Activated CD4-positive, alpha-beta memory T cell treated with anti-CD3 and anti-CD28 coated beads, Interleukin-2, amount 10 ng/mL, durations not matched to agents 7 days and 5 days (primary cell): ENCODE measurements at regions of chr7 and their contacts with region 1.

Region 1: DNA sequence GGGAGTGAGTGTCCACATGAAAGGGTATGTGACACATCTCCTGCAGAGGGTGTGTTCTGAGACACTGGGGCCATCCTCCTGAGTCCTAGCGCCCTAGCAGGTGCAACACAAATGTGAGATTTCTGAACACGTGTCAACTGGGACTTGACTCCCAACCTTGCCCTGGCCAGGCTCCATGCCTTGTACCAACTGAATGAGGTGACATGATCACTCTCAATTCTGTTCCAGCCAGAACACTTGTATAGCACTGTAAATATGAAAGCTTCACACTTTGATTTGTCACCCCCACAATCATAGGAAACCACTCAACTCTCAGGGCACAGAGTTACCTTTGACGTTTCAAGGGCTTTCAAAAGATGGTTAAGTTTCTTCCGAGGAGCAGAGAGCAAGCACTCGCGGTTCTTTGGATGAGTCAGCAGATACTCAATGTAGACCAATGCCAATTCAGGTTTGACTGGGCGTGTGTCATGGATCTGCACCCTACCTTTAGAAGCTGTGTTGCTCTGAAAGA is 48.6 kb downstream of the NCAPG2 start:
- DNase-seq: peak; percentile 78
- H3K4me3 Mint-ChIP-seq: peak overlapping the region; percentile 31
- H3K27ac Mint-ChIP-seq: peak overlapping the region; percentile 92
- H3K4me1 Mint-ChIP-seq: peaks cover 36% of the 10 kb centered on the region
- H3K27me3 Mint-ChIP-seq: no peaks in the 10 kb centered on the region

Region 2: GRCh38 chr7:158695726-158696452 is 39.9 kb after region 1 on chr7:
- CTCF ChIA-PET with region 1: interaction called, 5 read pairs
- POLR2A ChIA-PET with region 1: interaction called, 14 read pairs
- DNase-seq: peak; percentile 48
- H3K4me3 Mint-ChIP-seq: no peak overlapping the region
- H3K27ac Mint-ChIP-seq: peak overlapping the region; percentile 44
- H3K4me1 Mint-ChIP-seq: peaks cover 59% of the 10 kb centered on the region
- H3K27me3 Mint-ChIP-seq: no peaks in the 10 kb centered on the region

Region 3: GRCh38 chr7:159084069-159084801 is 428.2 kb after region 1 on chr7:
- CTCF ChIA-PET with region 1: no interaction called
- POLR2A ChIA-PET with region 1: no interaction called
- DNase-seq: no peak
- H3K4me3 Mint-ChIP-seq: no peak overlapping the region
- H3K27ac Mint-ChIP-seq: no peak overlapping the region
- H3K4me1 Mint-ChIP-seq: no peaks in the 10 kb centered on the region
- H3K27me3 Mint-ChIP-seq: peaks cover 6% of the 10 kb centered on the region